ENCODE measurements at regions of chr7 and their contacts with region 1.

Region 1: GRCh38 chr7:126803060-126803665 is 449.6 kb downstream of the GRM8 start:
- DNase-seq: peak in 5 of 9 donors; percentile 8 to 47 (median 21)
- ATAC-seq: no peak
- H3K4me3 ChIP-seq: no peak overlapping the region
- H3K4me3 Mint-ChIP-seq: no peak overlapping the region
- H3K27ac ChIP-seq: no peak overlapping the region
- H3K27ac Mint-ChIP-seq: no peak overlapping the region
- H3K4me1 ChIP-seq: no peaks in the 10 kb centered on the region
- H3K4me1 Mint-ChIP-seq: no peaks in the 10 kb centered on the region
- H3K27me3 ChIP-seq: no peaks in the 10 kb centered on the region
- H3K27me3 Mint-ChIP-seq: peaks cover 0 to 15% (median 7%) of the 10 kb centered on the region in 5 donors

Region 2: GRCh38 chr7:126780993-126781392 is 22.2 kb before region 1 on chr7:
- CTCF ChIA-PET with region 1: no interaction called
- POLR2A ChIA-PET with region 1: no interaction called
- intact Hi-C with region 1: no loop called
- DNase-seq: no peak
- ATAC-seq: no peak
- H3K4me3 ChIP-seq: no peak overlapping the region
- H3K4me3 Mint-ChIP-seq: no peak overlapping the region
- H3K27ac ChIP-seq: no peak overlapping the region
- H3K27ac Mint-ChIP-seq: no peak overlapping the region
- H3K4me1 ChIP-seq: no peaks in the 10 kb centered on the region
- H3K4me1 Mint-ChIP-seq: no peaks in the 10 kb centered on the region
- H3K27me3 ChIP-seq: no peaks in the 10 kb centered on the region
- H3K27me3 Mint-ChIP-seq: peaks cover 0 to 11% (median 0%) of the 10 kb centered on the region in 5 donors

Region 3: DNA sequence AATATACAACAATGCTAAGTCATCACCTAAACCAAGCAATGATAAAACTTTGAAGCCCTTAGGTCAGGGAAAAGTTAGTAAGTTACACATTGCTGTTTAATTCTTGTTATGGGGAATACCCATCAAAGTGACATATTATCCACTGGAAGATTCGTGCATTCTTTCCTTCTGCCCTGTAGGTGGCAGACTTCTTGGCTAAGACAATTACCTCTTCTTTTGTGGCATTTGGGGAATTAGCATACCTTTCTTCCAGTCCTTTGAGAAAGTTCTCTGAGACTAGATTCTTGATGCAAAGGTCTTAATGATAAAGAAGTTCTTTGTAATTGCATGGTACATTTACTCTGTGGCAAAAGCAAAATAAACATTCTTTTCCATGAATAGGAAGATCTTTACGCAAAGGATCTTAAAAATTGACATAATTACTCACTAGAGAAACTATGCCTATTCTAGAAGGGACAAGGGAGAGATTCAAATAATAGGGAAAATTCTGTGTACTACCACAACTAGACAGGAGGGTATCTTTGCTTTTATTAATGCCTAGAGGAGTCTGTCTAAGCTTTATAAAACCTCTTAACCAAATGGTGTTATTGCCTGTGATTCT is 53.6 kb after region 1 on chr7:
- CTCF ChIA-PET with region 1: no interaction called
- POLR2A ChIA-PET with region 1: no interaction called
- intact Hi-C with region 1: no loop called
- DNase-seq: no peak
- ATAC-seq: no peak
- H3K4me3 ChIP-seq: no peak overlapping the region
- H3K4me3 Mint-ChIP-seq: no peak overlapping the region
- H3K27ac ChIP-seq: no peak overlapping the region
- H3K27ac Mint-ChIP-seq: no peak overlapping the region
- H3K4me1 ChIP-seq: no peaks in the 10 kb centered on the region
- H3K4me1 Mint-ChIP-seq: no peaks in the 10 kb centered on the region
- H3K27me3 ChIP-seq: no peaks in the 10 kb centered on the region
- H3K27me3 Mint-ChIP-seq: peaks cover 0 to 26% (median 5%) of the 10 kb centered on the region in 5 donors

Region 4: GRCh38 chr7:127239814-127240213 is 436.7 kb after region 1 on chr7:
- CTCF ChIA-PET with region 1: no interaction called
- POLR2A ChIA-PET with region 1: no interaction called
- intact Hi-C with region 1: loop called in 1 of 2 experiments (anchors 5 kb)
- DNase-seq: no peak
- ATAC-seq: no peak
- H3K4me3 ChIP-seq: no peak overlapping the region
- H3K4me3 Mint-ChIP-seq: no peak overlapping the region
- H3K27ac ChIP-seq: no peak overlapping the region
- H3K27ac Mint-ChIP-seq: no peak overlapping the region
- H3K4me1 ChIP-seq: no peaks in the 10 kb centered on the region
- H3K4me1 Mint-ChIP-seq: no peaks in the 10 kb centered on the region
- H3K27me3 ChIP-seq: peaks cover 0 to 8% of the 10 kb centered on the region in 2 donors
- H3K27me3 Mint-ChIP-seq: peaks cover 46 to 57% (median 54%) of the 10 kb centered on the region in 5 donors

Region 5: DNA sequence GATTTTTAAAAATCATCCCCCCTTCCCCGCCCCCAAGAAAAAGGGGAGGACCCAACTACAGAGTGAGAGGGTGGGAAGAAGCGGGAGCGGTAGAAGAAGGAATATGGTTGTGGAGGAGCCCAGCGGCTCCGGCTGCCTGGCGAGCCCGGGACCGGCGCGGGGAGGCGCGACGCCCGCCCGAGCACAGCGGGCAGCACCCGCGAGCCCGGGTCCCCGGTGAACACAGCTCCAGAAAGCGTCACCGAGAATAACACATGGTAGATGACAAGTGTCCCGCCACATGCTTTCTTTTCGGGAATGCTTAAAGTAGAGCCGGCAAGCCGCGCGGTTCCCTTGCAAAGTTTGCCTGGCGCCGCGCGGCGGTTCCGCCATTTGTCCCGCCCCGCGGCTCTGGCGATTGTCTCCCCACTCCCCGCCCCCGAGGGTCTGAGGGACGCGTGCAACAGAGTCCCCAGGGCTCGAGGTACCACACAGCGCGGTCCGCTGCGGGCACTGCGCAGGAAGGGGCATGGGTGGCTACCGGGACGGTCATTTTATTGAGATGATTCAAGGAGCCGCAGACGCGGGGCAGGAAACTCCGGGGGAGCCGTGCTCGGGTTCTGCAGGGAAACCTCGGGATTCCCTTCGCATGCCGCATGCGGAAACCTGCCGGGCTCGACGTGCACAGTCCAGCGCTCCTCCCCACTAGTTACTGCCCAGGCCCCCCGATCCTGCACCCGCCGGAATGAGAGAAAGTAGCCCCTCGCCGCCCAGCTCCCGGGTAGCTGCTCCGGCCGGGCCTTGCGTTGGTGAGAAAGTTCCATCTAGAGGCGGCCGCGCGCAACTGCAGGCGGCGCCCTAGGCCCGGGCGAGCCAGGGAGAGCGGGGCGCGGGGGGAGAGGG is 450.4 kb after region 1 on chr7:
- CTCF ChIA-PET with region 1: no interaction called
- POLR2A ChIA-PET with region 1: no interaction called
- intact Hi-C with region 1: loop called in 1 of 2 experiments (anchors 1 kb)
- DNase-seq: peak; percentile 13 to 64 (median 41)
- ATAC-seq: peak; percentile 84
- H3K4me3 ChIP-seq: peak overlapping the region; percentile 76
- H3K4me3 Mint-ChIP-seq: peak overlapping the region; percentile 76 to 93 (median 88)
- H3K27ac ChIP-seq: no peak overlapping the region
- H3K27ac Mint-ChIP-seq: no peak overlapping the region
- H3K4me1 ChIP-seq: peaks cover 12 to 16% of the 10 kb centered on the region in 2 donors
- H3K4me1 Mint-ChIP-seq: peaks cover 12 to 32% (median 25%) of the 10 kb centered on the region in 7 donors
- H3K27me3 ChIP-seq: peaks cover 3 to 27% of the 10 kb centered on the region in 2 donors
- H3K27me3 Mint-ChIP-seq: peaks cover 65 to 83% (median 73%) of the 10 kb centered on the region in 5 donors

Region 6: GRCh38 chr7:128387216-128388144 is 1584.3 kb after region 1 on chr7:
- CTCF ChIA-PET with region 1: no interaction called
- POLR2A ChIA-PET with region 1: no interaction called
- intact Hi-C with region 1: loop called in 1 of 2 experiments (anchors 5 kb)
- DNase-seq: peak; percentile 31 to 67 (median 48)
- ATAC-seq: peak; percentile 87
- H3K4me3 ChIP-seq: no peak overlapping the region
- H3K4me3 Mint-ChIP-seq: no peak overlapping the region
- H3K27ac ChIP-seq: no peak overlapping the region
- H3K27ac Mint-ChIP-seq: no peak overlapping the region
- H3K4me1 ChIP-seq: no peaks in the 10 kb centered on the region
- H3K4me1 Mint-ChIP-seq: peaks cover 0 to 6% (median 1%) of the 10 kb centered on the region in 7 donors
- H3K27me3 ChIP-seq: no peaks in the 10 kb centered on the region
- H3K27me3 Mint-ChIP-seq: peaks cover 0 to 4% (median 0%) of the 10 kb centered on the region in 5 donors